Posterior vena cava (tissue), 2 donors: ENCODE measurements at regions of chr14 and their contacts with region 1.

Region 1: DNA sequence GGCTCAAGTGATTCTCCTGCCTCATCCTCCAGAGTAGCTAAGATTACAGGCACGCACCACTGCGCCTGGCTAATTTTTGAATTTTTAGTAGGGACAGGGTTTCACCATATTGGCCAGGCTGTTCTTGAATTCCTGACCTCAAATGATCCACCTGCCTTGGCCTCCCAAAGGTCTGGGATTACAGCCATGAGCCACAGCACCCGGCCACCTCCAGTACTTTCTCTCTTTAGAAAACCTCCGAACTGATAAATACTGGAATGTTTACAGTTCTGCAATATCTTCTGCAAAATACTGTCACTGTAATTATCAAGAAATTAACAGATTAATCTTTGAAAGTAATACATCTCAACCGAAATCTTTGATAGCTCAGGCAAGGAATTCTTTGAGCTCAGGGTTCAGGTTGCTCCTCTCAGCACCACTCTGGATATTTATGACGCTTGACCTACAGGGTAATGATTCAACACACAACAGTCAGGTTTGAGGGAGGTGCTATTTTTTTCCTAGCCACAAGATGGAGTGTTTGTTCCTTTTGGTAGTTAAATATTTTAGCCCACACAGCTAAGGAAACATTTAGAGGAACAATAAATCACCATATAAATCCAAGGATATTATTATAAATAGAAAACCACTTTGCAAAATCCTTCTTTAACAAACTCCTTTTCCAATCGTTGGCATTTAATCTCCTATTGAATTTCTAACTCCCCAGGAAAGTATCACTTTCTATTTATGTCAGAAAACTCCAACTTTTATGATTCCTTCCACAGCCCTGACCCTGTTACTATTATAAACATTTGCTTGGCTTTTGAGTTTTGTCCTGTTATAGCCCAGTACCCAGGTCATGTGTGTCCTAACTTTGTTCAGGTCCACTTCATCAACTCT is 48.6 kb upstream of the GTF2A1 start:
- DNase-seq: no peak

Region 2: DNA sequence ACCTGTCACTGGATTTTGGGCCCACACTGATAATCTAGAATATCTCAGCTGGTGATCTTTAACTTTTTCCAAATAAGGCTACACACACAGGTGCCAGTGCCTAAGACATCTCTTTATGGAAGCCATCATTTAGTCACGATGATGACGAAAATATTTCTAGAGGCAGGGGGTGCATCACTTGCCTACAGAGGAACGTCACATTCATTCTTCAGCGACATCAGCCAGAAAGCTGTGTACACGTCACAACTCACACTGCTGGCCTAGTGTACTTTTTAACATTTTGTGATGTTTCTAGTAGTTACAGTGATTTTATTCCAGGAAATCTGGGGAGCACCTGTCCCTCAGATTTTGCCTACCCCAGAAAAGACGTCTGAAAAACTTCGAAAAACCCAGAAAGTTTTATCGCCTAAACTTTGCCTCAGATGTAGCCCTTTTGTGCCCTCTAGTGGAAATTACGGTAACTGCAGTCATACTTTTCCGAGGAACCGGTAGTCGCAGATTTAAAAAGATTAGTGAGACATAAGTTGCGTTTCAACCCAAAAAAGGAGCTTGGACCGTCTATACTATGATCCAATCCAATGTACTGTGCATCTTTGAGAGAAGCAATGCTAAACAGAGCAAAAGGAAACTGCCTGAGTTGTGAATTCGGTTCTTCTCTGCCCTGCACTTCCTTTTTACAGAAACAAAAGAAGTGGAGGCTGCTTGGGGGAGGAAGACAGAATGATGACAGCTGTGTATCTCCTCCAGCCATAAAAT is 195.1 kb after region 1 on chr14:
- intact Hi-C with region 1: loop called in 1 of 2 experiments (anchors 5 kb)
- DNase-seq: no peak